Pancreas (tissue), 10 donors: ENCODE measurements at regions of chr5 and their contacts with region 1.

Region 1: DNA sequence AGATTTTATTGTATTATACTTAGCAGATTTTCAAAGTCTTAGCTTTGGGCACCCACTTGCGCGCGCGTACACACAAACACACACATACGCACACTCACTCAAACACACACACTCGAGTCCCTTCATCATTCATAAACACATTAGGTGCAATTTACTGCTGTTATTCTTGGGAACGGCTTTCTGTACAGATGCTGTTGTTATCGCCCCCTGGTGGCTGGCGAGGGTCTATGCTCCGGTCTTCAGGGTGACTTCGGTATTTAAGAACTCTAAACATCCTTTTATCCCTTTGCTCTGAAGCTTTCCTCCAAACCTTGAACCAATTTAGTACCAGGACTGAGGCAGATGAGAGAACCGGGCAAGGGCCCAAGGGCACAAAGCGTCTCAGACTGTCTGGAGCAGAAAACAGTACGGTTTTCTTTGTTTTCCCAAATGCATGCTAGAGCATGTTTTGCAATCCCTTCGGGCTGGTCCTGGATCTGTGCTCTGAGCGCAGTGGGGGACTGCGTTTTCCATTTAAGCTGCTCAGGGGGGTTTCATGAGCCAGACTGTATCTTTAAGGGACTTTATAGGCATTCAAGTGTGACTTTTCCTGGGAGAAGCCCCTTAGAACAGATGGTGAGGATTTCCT is 1.7 kb upstream of the SLIT3 start:
- DNase-seq: peak; percentile 42 to 85 (median 72)
- ATAC-seq: peak; percentile 62 to 81 (median 78)
- H3K4me3 ChIP-seq: no peak overlapping the region
- H3K27ac ChIP-seq: no peak overlapping the region
- H3K4me1 ChIP-seq: no peaks in the 10 kb centered on the region
- H3K27me3 ChIP-seq: peaks cover 0 to 20% (median 1%) of the 10 kb centered on the region in 4 donors
- CTCF ChIP-seq: peak; percentile 79 to 90 (median 86)

Region 2: GRCh38 chr5:168679515-168679920 is 623.1 kb before region 1 on chr5:
- intact Hi-C with region 1: loop called in 1 of 3 experiments (anchors 10 kb)
- DNase-seq: peak in 5 of 6 donors; percentile 28 to 79 (median 63)
- ATAC-seq: peak; percentile 40 to 86 (median 82)
- H3K4me3 ChIP-seq: no peak overlapping the region
- H3K27ac ChIP-seq: no peak overlapping the region
- H3K4me1 ChIP-seq: no peaks in the 10 kb centered on the region
- H3K27me3 ChIP-seq: no peaks in the 10 kb centered on the region
- CTCF ChIP-seq: peak; percentile 76 to 91 (median 86)

Region 3: GRCh38 chr5:168987543-168988300 is 314.9 kb before region 1 on chr5:
- intact Hi-C with region 1: loop called in 2 of 3 experiments (anchors 10 kb)
- DNase-seq: peak; percentile 31 to 89 (median 70)
- ATAC-seq: peak; percentile 56 to 95 (median 86)
- H3K4me3 ChIP-seq: no peak overlapping the region
- H3K27ac ChIP-seq: no peak overlapping the region
- H3K4me1 ChIP-seq: no peaks in the 10 kb centered on the region
- H3K27me3 ChIP-seq: peaks cover 0 to 12% (median 0%) of the 10 kb centered on the region in 4 donors
- CTCF ChIP-seq: peak; percentile 75 to 90 (median 82)

Region 4: DNA sequence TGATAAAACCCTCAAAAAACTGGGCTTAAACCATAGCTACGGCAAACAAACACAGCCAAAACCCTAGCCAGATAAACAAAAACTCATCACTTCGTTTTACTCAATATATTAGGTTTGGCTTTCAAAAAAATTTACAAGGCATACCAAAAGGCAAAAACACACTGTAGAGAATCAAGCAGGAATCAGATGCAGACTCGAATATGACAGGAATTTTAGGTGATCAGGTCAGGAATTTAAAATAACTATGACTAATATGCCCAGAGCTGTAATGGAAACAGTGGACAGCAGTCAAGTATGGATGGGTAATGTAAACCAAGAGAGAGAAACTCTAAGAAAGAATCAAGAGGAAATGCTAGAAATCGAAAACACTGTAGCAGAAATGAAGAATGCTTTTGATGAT is 308.0 kb after region 1 on chr5:
- intact Hi-C with region 1: no loop called
- DNase-seq: no peak
- ATAC-seq: no peak
- H3K4me3 ChIP-seq: no peak overlapping the region
- H3K27ac ChIP-seq: no peak overlapping the region
- H3K4me1 ChIP-seq: no peaks in the 10 kb centered on the region
- H3K27me3 ChIP-seq: no peaks in the 10 kb centered on the region
- CTCF ChIP-seq: no peak